ENCODE measurements at regions of chr12 and their contacts with region 1.

Region 1: DNA sequence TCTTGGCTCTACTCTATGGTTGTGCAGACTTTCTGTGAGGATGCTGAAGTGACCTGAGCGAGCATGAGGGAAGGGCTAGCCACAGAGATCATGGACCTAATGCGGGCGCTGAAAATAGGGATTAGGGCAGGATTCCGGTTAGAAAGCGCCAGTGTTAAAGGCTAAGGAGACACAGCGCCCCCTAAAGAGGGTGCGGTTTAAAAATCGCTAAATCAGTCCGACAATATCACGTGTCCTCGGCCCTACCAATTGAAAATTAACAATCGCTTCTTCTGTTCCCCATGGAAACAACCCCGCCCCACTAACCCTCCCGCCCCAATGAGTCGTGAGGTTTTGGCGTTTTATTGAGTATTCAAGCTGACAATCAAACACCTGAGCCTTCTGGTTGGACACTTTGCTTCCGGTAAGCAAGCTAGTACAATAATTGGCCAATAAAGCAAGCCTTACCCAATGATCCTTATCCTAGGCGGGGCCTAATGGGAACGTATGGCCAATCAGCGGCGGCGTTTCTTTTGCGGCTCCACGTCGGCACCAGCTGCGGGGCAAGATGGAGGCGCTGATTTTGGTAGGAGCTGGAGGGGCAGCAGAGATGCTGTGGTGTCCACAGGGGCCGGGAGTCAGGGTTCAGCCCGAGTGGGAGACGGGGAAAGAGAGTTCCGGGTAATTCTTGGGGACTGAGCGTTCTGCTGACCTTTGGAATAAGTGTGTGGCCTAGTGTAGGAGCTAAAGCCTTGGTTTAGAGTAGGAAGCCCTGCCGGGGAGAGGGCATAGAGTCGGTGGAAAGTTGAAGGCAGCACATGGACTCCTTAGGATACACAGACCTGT is at the start of gene COPZ1:
- DNase-seq: peak; percentile 100
- H3K4me3 Mint-ChIP-seq: peak within 1 kb of the TSS; percentile 100
- H3K27ac Mint-ChIP-seq: peak within 1 kb of the TSS; percentile 100
- H3K4me1 Mint-ChIP-seq: peaks cover 19% of the 10 kb centered on the region
- H3K27me3 Mint-ChIP-seq: no peaks in the 10 kb centered on the region
- CTCF ChIP-seq: peak; percentile 77
- total RNA-seq, gene COPZ1: 207 and 299 TPM in 2 replicates

Region 2: DNA sequence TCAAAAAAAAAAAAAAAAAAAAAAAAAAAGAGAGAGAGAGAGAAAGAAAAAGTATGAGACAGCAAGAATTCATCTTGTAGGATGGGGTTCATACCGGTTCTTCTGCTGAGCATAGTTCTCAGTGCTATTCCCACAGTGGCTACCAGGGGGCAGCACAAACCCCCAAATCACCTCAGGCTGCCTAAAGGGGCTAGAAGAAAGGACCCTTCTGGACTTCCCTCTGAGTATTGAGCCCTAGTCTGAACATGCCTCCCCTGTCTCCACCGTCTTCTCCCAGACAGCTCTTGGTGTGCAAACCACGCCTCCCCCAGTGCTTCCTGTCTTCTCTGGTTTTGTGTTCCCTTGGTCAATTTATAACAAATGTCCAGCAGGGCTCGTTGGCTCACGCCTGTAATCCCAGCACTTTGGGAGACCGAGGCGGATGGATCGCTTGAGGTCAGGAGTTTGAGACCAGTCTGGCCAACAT is 104.7 kb before region 1 on chr12:
- CTCF ChIA-PET with region 1: interaction called, 8 read pairs
- POLR2A ChIA-PET with region 1: interaction called, 4 read pairs
- intact Hi-C with region 1: loop called (anchors 1 kb)
- DNase-seq: peak; percentile 75
- H3K4me3 Mint-ChIP-seq: no peak overlapping the region
- H3K27ac Mint-ChIP-seq: no peak overlapping the region
- H3K4me1 Mint-ChIP-seq: peaks cover 18% of the 10 kb centered on the region
- H3K27me3 Mint-ChIP-seq: no peaks in the 10 kb centered on the region
- CTCF ChIP-seq: peak; percentile 78

Region 3: GRCh38 chr12:54285150-54286041 is 39.4 kb before region 1 on chr12:
- CTCF ChIA-PET with region 1: interaction called, 21 read pairs
- POLR2A ChIA-PET with region 1: interaction called, 41 read pairs
- intact Hi-C with region 1: loop called (anchors 1 kb)
- DNase-seq: no peak
- H3K4me3 Mint-ChIP-seq: no peak overlapping the region
- H3K27ac Mint-ChIP-seq: no peak overlapping the region
- H3K4me1 Mint-ChIP-seq: peaks cover 38% of the 10 kb centered on the region
- H3K27me3 Mint-ChIP-seq: no peaks in the 10 kb centered on the region
- CTCF ChIP-seq: peak; percentile 5

Region 4: GRCh38 chr12:54300732-54301427 is 23.9 kb before region 1 on chr12 and contains the start of gene NFE2:
- CTCF ChIA-PET with region 1: interaction called, 57 read pairs
- POLR2A ChIA-PET with region 1: interaction called, 18 read pairs
- intact Hi-C with region 1: no loop called
- DNase-seq: peak; percentile 79
- H3K4me3 Mint-ChIP-seq: peak within 1 kb of the TSS; percentile 4
- H3K27ac Mint-ChIP-seq: peak within 1 kb of the TSS; percentile 6
- H3K4me1 Mint-ChIP-seq: peaks cover 46% of the 10 kb centered on the region
- H3K27me3 Mint-ChIP-seq: no peaks in the 10 kb centered on the region
- CTCF ChIP-seq: no peak
- total RNA-seq, gene NFE2: 0.40 and 0.64 TPM in 2 replicates

Region 5: DNA sequence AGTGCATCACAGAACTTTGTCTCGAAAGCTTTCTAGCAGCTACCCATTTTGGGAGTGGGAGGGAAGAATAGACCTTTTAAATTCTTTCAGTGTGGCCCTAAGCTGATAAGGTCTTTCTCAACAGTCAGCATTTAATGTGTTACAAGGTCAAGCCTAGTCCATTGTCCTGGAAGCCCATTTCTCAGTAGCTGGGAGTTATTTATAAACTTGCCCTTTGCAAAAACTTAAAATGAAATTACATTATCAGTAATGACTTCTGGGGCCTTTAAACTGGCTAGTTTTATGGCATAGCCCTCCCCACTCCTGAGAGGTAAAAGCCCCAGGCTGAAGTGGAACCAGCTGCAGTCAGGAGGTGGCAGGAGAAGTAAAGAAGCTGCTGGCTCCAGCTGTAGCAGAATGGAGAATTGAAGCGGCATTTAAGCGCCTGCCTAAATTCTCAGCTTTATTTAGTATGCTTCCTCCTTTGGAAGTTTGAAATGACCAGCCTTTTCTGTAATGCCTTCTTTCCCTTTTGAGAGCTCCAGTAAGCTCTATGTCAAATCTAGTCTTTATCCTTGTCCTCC is 12.5 kb after region 1 on chr12:
- CTCF ChIA-PET with region 1: interaction called, 21 read pairs
- POLR2A ChIA-PET with region 1: interaction called, 12 read pairs
- intact Hi-C with region 1: no loop called
- DNase-seq: no peak
- H3K4me3 Mint-ChIP-seq: no peak overlapping the region
- H3K27ac Mint-ChIP-seq: no peak overlapping the region
- H3K4me1 Mint-ChIP-seq: peaks cover 13% of the 10 kb centered on the region
- H3K27me3 Mint-ChIP-seq: no peaks in the 10 kb centered on the region
- CTCF ChIP-seq: no peak

Region 6: GRCh38 chr12:54439521-54440255 is 114.9 kb after region 1 on chr12:
- CTCF ChIA-PET with region 1: no interaction called
- POLR2A ChIA-PET with region 1: no interaction called
- intact Hi-C with region 1: no loop called
- DNase-seq: peak; percentile 73
- H3K4me3 Mint-ChIP-seq: no peak overlapping the region
- H3K27ac Mint-ChIP-seq: peak overlapping the region; percentile 22
- H3K4me1 Mint-ChIP-seq: peaks cover 13% of the 10 kb centered on the region
- H3K27me3 Mint-ChIP-seq: no peaks in the 10 kb centered on the region
- CTCF ChIP-seq: peak; percentile 91